ENCODE measurements at regions of chr4 and their contacts with region 1.

Region 1: DNA sequence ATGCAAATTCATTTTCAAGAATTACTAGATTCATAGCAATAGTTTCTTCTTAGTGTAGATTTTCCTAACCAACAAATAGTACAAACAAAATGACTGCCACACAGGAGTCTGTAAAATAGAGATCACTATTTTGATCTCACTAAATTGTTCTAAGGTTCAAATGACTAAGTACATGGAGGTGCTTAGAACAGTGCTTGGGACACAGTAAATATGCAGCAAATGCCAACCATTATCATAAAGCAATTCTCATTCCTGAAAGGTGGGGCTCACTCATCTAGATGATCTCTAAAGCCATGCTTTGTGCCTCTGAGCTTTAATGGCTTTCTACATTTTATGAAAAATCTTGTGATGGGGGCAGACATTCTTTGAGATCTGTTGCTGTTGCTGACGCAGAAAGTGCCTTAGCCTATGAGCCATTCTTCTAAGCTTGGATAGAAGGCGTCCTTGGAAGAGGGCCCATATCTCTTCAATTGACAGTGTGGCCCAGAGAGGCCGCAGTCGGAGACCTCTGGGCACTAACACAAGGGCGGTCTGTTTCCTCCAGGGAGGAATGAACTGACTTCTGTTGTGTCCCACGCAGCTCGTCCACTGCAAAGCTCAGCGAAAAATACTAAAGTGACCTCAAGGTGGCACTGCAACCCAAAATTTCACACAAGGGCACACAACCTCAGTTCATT is 23.5 kb downstream of the TLR10 start:
- DNase-seq: peak; percentile 81
- H3K4me3 ChIP-seq: no peak overlapping the region
- H3K27ac ChIP-seq: peak overlapping the region in 2 of 4 donors; percentile 29 to 31
- H3K4me1 ChIP-seq: peaks cover 0 to 5% (median 2%) of the 10 kb centered on the region in 4 donors
- H3K27me3 ChIP-seq: no peaks in the 10 kb centered on the region
- CTCF ChIP-seq: peak; percentile 28 to 66 (median 58)
- EP300 ChIP-seq: no peak
- POLR2A ChIP-seq: no peak

Region 2: GRCh38 chr4:38782452-38783108 is 23.3 kb after region 1 on chr4 and contains the start of gene TLR10:
- intact Hi-C with region 1: loop called (anchors 2 kb)
- DNase-seq: no peak
- H3K4me3 ChIP-seq: no peak within 1 kb of the TSS
- H3K27ac ChIP-seq: no peak within 1 kb of the TSS
- H3K4me1 ChIP-seq: no peaks in the 10 kb centered on the region
- H3K27me3 ChIP-seq: no peaks in the 10 kb centered on the region
- CTCF ChIP-seq: peak; percentile 53 to 75 (median 58)
- EP300 ChIP-seq: no peak
- POLR2A ChIP-seq: no peak
- total RNA-seq, gene TLR10: under 0.01 to 0.27 (median 0.16) TPM in 3 of 4 donors, not detected in the other

Region 3: DNA sequence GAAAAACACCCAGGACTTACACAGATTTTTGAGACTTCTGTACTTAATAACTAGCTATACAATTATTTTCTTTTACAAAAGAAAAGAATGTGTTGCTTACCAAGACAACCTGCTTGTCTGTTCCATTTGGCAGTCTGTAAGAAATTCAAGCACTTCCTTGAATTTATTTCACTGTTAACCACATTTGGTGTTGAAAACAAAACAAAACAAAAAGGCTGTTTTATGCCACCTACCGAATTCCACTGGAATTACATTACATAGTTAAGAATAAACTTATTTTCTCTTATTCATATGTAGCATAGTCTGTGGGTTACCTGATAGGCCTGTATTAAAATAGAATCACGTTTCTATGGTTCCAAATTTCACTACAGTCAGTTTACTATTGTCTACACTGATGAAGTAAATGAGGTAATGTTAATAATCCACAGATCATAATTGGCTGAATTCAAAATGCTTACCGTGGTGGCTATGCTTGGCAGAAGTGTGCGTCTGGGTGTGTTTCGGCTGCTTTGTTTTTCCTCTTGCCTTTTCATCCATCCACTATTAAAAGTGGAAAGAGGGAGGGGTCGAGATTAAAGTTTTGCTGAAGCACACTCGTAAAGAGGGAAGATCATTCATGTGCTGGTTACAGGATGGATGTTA is 45.5 kb after region 1 on chr4 and contains the start of gene TLR1:
- intact Hi-C with region 1: loop called (anchors 5 kb)
- DNase-seq: no peak
- H3K4me3 ChIP-seq: peak within 1 kb of the TSS; percentile 19 to 45 (median 36)
- H3K27ac ChIP-seq: peak within 1 kb of the TSS; percentile 64 to 79 (median 69)
- H3K4me1 ChIP-seq: peaks cover 0 to 26% (median 15%) of the 10 kb centered on the region in 4 donors
- H3K27me3 ChIP-seq: no peaks in the 10 kb centered on the region
- CTCF ChIP-seq: peak in 3 of 4 experiments; percentile 57 to 60 (median 59)
- EP300 ChIP-seq: no peak
- POLR2A ChIP-seq: no peak
- total RNA-seq, gene TLR1: 8.7 to 15.7 (median 13.0) TPM

Region 4: DNA sequence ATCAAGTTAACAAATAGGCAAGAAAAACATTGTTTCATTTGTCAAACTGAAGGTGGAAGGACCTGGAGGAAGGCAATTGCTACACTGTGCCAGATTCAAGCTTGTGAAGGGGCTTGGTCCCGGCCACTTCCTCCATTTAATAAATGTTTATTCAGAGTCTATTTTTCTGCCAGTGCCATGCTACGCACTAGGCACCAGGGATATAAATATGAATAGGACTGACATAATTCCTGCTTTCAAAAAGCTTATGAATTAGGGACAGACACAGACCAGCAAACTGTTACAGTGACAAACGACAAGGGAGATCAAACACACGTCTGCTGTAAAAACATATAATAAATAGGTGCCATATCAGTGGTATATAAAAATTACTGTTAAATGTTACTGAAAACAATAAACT is 96.8 kb after region 1 on chr4:
- intact Hi-C with region 1: no loop called
- DNase-seq: no peak
- H3K4me3 ChIP-seq: peak overlapping the region in 3 of 4 donors; percentile 7 to 30 (median 24)
- H3K27ac ChIP-seq: peak overlapping the region; percentile 14 to 68 (median 50)
- H3K4me1 ChIP-seq: peaks cover 0 to 15% (median 5%) of the 10 kb centered on the region in 4 donors
- H3K27me3 ChIP-seq: no peaks in the 10 kb centered on the region
- CTCF ChIP-seq: no peak
- EP300 ChIP-seq: no peak
- POLR2A ChIP-seq: no peak

Region 5: GRCh38 chr4:38867478-38868058 is 108.3 kb after region 1 on chr4 and contains the start of gene FAM114A1:
- intact Hi-C with region 1: loop called (anchors 5 kb)
- DNase-seq: peak; percentile 91
- H3K4me3 ChIP-seq: peak within 1 kb of the TSS; percentile 77 to 94 (median 90)
- H3K27ac ChIP-seq: peak within 1 kb of the TSS; percentile 92 to 99 (median 97)
- H3K4me1 ChIP-seq: peaks cover 0 to 51% (median 43%) of the 10 kb centered on the region in 4 donors
- H3K27me3 ChIP-seq: no peaks in the 10 kb centered on the region
- CTCF ChIP-seq: no peak
- EP300 ChIP-seq: no peak
- POLR2A ChIP-seq: peak; percentile 31 to 71
- total RNA-seq, gene FAM114A1: 120 to 189 (median 134) TPM

Region 6: GRCh38 chr4:39134683-39135319 is 375.6 kb after region 1 on chr4:
- intact Hi-C with region 1: loop called (anchors 5 kb)
- DNase-seq: no peak
- H3K4me3 ChIP-seq: peak overlapping the region in 1 of 4 donors; percentile 12
- H3K27ac ChIP-seq: peak overlapping the region in 3 of 4 donors; percentile 23 to 68 (median 66)
- H3K4me1 ChIP-seq: peaks cover 0 to 18% (median 10%) of the 10 kb centered on the region in 4 donors
- H3K27me3 ChIP-seq: no peaks in the 10 kb centered on the region
- CTCF ChIP-seq: no peak
- EP300 ChIP-seq: no peak
- POLR2A ChIP-seq: no peak